Activated CD8-positive, alpha-beta memory T cell treated with anti-CD3 and anti-CD28 coated beads, Interleukin-2, amount 10 ng/mL, durations not matched to agents 7 days and 5 days (primary cell): ENCODE measurements at regions of chr9 and their contacts with region 1.

Region 1: DNA sequence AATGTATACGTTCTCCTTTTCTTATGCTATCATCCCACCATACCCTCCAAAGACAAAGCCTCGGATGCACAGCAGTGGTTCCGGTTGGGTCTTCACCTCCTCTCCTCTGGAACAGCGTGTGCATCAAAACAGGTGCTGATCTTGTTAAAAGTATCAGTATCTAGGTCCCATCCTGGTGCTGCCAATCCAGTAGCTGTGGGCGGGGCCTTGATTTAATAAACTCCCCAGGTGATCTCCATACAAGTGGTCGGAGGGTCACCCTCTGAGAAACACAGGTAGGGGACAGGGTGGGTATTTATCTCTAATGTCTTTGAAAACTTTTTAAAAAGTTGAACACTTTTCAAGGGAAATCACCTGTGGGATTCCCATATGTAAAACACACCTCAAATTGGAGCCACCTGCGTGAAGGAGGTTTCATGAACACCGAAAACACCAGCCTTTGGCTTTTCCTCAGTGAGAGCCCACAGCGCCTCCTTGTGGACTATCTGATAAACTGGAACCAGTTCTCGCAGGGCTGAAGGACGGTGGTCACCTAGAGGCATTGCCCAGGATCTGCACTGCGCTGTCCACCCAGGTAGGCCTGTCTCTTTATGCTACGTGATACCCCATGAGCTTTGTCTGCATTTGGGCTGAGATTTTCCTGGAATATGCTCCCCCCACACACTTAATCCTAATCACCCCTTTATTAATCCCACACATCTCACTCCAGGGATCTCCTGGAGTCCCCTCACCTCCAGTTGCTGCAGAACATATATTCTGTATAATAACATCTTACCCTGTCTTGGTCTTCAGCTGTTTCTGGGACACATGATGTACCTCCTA is 80.5 kb upstream of the EPB41L4B start:
- DNase-seq: peak; percentile 54
- ATAC-seq: peak; percentile 67
- H3K4me3 Mint-ChIP-seq: no peak overlapping the region
- H3K27ac Mint-ChIP-seq: peak overlapping the region; percentile 41
- H3K4me1 Mint-ChIP-seq: peaks cover 15% of the 10 kb centered on the region
- H3K27me3 Mint-ChIP-seq: peaks cover 12% of the 10 kb centered on the region

Region 2: DNA sequence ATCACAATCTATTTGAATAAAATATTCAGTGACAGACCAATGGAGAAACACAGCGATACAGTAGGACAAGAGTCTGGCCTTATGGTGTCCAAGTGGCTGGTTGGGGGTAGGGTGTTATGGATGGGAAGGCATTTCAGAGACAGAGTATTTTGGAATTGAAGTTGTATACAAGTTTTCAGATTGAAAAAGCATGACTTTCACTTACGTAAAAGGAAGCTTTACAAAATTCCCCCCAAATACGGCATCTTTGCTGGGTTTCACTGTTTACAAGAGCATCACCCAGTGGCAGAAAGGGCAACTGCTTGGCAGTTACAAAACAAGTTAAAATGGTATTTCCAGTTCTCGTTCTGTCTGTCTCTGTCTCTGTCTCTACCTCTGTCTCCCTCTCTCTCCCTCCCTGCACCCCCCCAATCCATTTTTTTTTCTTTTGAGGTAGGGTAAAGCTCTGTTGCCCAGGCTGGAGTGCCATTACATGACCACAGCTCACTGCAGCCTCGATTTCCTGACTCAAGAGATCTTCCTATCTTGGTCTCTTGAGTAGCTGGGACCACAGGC is 10.5 kb after region 1 on chr9:
- CTCF ChIA-PET with region 1: interaction called, 31 read pairs
- DNase-seq: peak; percentile 68
- ATAC-seq: peak; percentile 43
- H3K4me3 Mint-ChIP-seq: peak overlapping the region; percentile 34
- H3K27ac Mint-ChIP-seq: peak overlapping the region; percentile 94
- H3K4me1 Mint-ChIP-seq: peaks cover 60% of the 10 kb centered on the region
- H3K27me3 Mint-ChIP-seq: peaks cover 3% of the 10 kb centered on the region

Region 3: DNA sequence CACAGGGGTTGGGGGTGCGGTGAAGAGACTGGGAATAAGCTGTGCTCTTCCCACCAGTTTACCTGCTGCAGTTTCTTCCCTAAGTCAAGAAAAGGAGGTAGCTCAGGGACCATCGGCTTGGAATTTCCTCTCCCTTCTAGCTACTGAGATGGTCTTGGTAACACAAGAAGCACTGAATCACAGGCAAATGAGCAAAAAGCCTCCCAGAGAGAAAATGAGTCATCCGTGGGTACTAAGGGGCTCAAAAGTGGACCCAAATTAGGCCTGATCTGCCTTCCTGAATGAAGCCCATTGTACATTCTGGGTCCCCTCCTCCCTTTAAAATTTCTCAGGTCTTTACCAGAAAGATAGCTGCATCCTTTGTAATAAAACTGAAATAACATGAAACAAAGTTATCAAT is 46.8 kb after region 1 on chr9:
- CTCF ChIA-PET with region 1: no interaction called
- DNase-seq: no peak
- ATAC-seq: peak; percentile 22
- H3K4me3 Mint-ChIP-seq: no peak overlapping the region
- H3K27ac Mint-ChIP-seq: peak overlapping the region; percentile 63
- H3K4me1 Mint-ChIP-seq: peaks cover 19% of the 10 kb centered on the region
- H3K27me3 Mint-ChIP-seq: peaks cover 15% of the 10 kb centered on the region

Region 4: GRCh38 chr9:109459423-109459822 is 58.0 kb after region 1 on chr9:
- CTCF ChIA-PET with region 1: no interaction called
- DNase-seq: no peak
- ATAC-seq: no peak
- H3K4me3 Mint-ChIP-seq: no peak overlapping the region
- H3K27ac Mint-ChIP-seq: no peak overlapping the region
- H3K4me1 Mint-ChIP-seq: peaks cover 32% of the 10 kb centered on the region
- H3K27me3 Mint-ChIP-seq: peaks cover 33% of the 10 kb centered on the region

Region 5: GRCh38 chr9:109600144-109600543 is 198.8 kb after region 1 on chr9:
- CTCF ChIA-PET with region 1: no interaction called
- DNase-seq: no peak
- ATAC-seq: no peak
- H3K4me3 Mint-ChIP-seq: no peak overlapping the region
- H3K27ac Mint-ChIP-seq: no peak overlapping the region
- H3K4me1 Mint-ChIP-seq: no peaks in the 10 kb centered on the region
- H3K27me3 Mint-ChIP-seq: no peaks in the 10 kb centered on the region